ENCODE measurements at regions of chr11 and their contacts with region 1.

Region 1: GRCh38 chr11:72189461-72190275 is 2.3 kb upstream of the FOLR1 start:
- DNase-seq: no peak
- H3K4me3 ChIP-seq: no peak overlapping the region
- H3K4me3 Mint-ChIP-seq: no peak overlapping the region
- H3K27ac ChIP-seq: no peak overlapping the region
- H3K27ac Mint-ChIP-seq: no peak overlapping the region
- H3K4me1 ChIP-seq: no peaks in the 10 kb centered on the region
- H3K4me1 Mint-ChIP-seq: no peaks in the 10 kb centered on the region
- H3K27me3 ChIP-seq: no peaks in the 10 kb centered on the region
- H3K27me3 Mint-ChIP-seq: no peaks in the 10 kb centered on the region

Region 2: DNA sequence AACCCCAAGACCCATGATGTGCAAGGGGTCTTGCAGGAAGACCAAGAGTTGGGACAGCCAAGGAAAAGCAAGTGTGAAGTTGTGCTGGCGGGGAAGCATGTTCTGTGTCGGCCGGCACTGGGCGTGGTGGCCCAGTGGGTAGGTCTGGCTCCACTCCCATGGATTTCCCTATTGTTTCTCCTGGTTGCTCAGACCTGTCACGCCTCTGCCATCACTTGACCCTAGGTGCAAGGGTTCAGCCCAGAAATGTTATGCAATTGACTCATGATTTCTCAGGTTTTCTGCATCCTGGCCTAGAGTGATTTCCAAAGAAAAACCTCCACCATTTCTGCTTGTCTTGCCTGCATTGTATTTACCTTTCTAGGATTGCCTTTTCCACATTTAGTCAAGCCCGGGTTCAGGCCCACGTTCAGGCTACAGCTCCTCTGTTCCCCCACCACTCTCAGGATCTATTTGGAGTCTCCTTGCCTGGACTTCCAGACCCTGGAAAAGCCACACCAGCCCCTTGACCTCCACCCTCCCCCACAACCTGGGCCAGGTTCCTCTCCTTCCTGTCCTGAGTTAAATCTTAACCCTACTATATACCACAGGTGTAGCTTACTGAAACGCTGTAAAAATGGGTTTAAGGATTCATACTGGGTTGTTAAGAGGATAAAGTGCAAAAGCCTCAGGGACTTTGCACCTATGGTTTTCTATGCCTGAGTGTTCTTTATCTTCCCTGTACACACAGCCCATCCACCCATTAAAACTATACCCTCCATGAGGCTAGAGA is 15.2 kb before region 1 on chr11:
- CTCF ChIA-PET with region 1: no interaction called
- POLR2A ChIA-PET with region 1: no interaction called
- intact Hi-C with region 1: no loop called
- DNase-seq: no peak
- H3K4me3 ChIP-seq: no peak overlapping the region
- H3K4me3 Mint-ChIP-seq: no peak overlapping the region
- H3K27ac ChIP-seq: no peak overlapping the region
- H3K27ac Mint-ChIP-seq: no peak overlapping the region
- H3K4me1 ChIP-seq: no peaks in the 10 kb centered on the region
- H3K4me1 Mint-ChIP-seq: peaks cover 0 to 3% (median under 1%) of the 10 kb centered on the region in 4 donors
- H3K27me3 ChIP-seq: no peaks in the 10 kb centered on the region
- H3K27me3 Mint-ChIP-seq: peaks cover 5 to 13% of the 10 kb centered on the region in 2 donors

Region 3: GRCh38 chr11:72204886-72205285 is 15.2 kb after region 1 on chr11:
- CTCF ChIA-PET with region 1: interaction called, 11 read pairs
- POLR2A ChIA-PET with region 1: no interaction called
- intact Hi-C with region 1: no loop called
- DNase-seq: no peak
- H3K4me3 ChIP-seq: no peak overlapping the region
- H3K4me3 Mint-ChIP-seq: no peak overlapping the region
- H3K27ac ChIP-seq: no peak overlapping the region
- H3K27ac Mint-ChIP-seq: no peak overlapping the region
- H3K4me1 ChIP-seq: no peaks in the 10 kb centered on the region
- H3K4me1 Mint-ChIP-seq: peaks cover 2 to 5% (median 3%) of the 10 kb centered on the region in 4 donors
- H3K27me3 ChIP-seq: no peaks in the 10 kb centered on the region
- H3K27me3 Mint-ChIP-seq: peaks cover 1 to 14% of the 10 kb centered on the region in 2 donors

Region 4: GRCh38 chr11:72217841-72218240 is 28.2 kb after region 1 on chr11:
- CTCF ChIA-PET with region 1: interaction called, 18 read pairs
- POLR2A ChIA-PET with region 1: no interaction called
- intact Hi-C with region 1: loop called (anchors 2 kb)
- DNase-seq: no peak
- H3K4me3 ChIP-seq: no peak overlapping the region
- H3K4me3 Mint-ChIP-seq: no peak overlapping the region
- H3K27ac ChIP-seq: no peak overlapping the region
- H3K27ac Mint-ChIP-seq: no peak overlapping the region
- H3K4me1 ChIP-seq: peaks cover 9% of the 10 kb centered on the region
- H3K4me1 Mint-ChIP-seq: peaks cover 2 to 15% (median 6%) of the 10 kb centered on the region in 4 donors
- H3K27me3 ChIP-seq: peaks cover 3% of the 10 kb centered on the region
- H3K27me3 Mint-ChIP-seq: peaks cover 14 to 21% of the 10 kb centered on the region in 2 donors

Region 5: DNA sequence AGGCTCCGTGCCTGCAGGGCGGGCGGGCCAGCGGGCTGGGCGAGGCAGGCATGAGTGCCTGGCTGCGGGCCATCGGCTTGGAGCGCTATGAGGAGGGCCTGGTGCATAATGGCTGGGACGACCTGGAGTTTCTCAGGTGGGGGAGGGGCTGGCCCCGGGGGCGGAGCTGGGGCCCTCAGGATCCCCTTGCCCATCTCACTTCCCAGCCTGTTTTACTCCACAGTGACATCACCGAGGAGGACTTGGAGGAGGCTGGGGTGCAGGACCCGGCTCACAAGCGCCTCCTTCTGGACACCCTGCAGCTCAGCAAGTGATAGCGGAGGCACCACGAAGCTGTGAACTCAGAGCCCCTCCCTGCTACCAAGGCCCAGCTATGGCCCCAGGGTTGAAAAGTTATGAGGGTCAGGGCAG is 48.4 kb after region 1 on chr11:
- CTCF ChIA-PET with region 1: interaction called, 12 read pairs
- POLR2A ChIA-PET with region 1: no interaction called
- intact Hi-C with region 1: no loop called
- DNase-seq: peak in 4 of 5 donors; percentile 43 to 49 (median 46)
- H3K4me3 ChIP-seq: no peak overlapping the region
- H3K4me3 Mint-ChIP-seq: no peak overlapping the region
- H3K27ac ChIP-seq: no peak overlapping the region
- H3K27ac Mint-ChIP-seq: no peak overlapping the region
- H3K4me1 ChIP-seq: peaks cover 18% of the 10 kb centered on the region
- H3K4me1 Mint-ChIP-seq: peaks cover 12 to 28% (median 19%) of the 10 kb centered on the region in 4 donors
- H3K27me3 ChIP-seq: peaks cover 21% of the 10 kb centered on the region
- H3K27me3 Mint-ChIP-seq: peaks cover 25 to 26% of the 10 kb centered on the region in 2 donors

Region 6: GRCh38 chr11:72373163-72373562 is 183.5 kb after region 1 on chr11:
- CTCF ChIA-PET with region 1: no interaction called
- POLR2A ChIA-PET with region 1: no interaction called
- intact Hi-C with region 1: no loop called
- DNase-seq: no peak
- H3K4me3 ChIP-seq: no peak overlapping the region
- H3K4me3 Mint-ChIP-seq: no peak overlapping the region
- H3K27ac ChIP-seq: no peak overlapping the region
- H3K27ac Mint-ChIP-seq: no peak overlapping the region
- H3K4me1 ChIP-seq: no peaks in the 10 kb centered on the region
- H3K4me1 Mint-ChIP-seq: peaks cover 0 to 1% (median 0%) of the 10 kb centered on the region in 4 donors
- H3K27me3 ChIP-seq: no peaks in the 10 kb centered on the region
- H3K27me3 Mint-ChIP-seq: no peaks in the 10 kb centered on the region